Aorta (tissue), 5 donors: ENCODE measurements at regions of chr16 and their contacts with region 1.

Region 1: DNA sequence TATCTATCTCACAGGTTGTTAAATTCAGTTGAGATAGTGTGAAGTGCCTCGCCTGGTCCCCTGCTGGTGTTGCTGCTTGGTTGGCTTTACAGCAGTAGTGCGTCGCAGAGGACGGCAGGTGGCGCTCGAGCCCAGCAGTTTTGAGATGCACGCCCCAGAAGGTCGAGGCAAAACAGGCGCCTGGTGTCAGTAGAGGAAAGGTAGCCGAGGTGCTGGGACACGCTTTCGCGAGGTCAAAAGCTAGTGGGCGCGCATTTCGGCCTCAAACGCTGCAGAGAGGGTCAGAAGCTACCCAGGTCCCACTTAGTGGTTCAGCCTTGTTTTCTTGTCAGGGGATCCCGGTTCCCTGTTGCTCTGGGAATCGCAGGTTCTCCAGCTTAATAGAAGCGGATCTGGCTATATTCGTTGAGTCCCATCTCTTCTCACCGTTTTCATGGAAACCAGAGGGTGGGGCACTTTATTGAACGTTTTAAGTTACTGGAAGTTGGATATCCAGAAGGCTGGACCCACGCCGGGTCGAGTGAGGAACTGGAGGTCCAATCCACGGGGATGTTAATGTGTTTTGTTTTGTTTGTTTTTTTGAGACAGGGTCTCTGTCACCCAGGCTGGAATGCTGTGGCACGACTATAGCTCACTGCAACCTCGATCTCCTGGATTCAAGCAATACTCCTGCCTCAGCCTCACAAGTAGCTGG is 10.3 kb upstream of the ZFP90 start:
- DNase-seq: peak; percentile 89 to 95
- ATAC-seq: peak; percentile 94
- H3K4me3 ChIP-seq: no peak overlapping the region
- H3K27ac ChIP-seq: no peak overlapping the region
- H3K4me1 ChIP-seq: no peaks in the 10 kb centered on the region
- H3K27me3 ChIP-seq: no peaks in the 10 kb centered on the region

Region 2: DNA sequence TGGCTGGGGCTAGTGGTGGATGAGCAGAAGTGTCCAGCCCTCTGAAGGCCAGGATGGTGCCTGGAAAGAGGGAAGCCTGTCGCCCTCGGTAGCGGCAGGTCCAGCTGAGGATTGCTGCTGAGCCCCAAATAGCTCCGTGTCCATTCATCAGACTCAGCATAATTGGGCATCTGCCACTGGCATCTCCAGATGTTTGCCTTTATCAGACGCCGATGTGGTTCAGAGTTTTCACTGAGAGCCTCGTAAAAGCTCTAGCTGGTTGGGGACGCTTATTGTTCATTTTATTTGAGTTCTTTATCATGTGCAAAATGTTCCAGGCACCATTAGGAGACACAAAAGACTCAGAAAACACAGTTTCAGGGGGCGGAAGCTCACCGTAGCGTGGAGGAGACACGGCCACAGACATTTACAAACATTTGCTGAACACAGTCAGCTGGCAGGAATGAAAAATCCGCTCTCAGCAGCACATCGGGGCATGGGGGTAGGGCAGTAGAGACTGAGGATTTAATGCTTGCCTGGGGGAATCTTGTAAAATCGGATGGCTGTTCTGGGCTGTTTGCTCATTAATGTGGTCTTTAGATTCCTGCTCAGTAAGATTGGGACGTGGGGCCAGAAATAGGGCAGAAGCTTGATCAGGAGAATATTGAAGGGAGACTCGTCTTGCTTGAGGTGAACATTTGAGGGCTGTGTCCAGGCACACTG is 122.2 kb before region 1 on chr16:
- intact Hi-C with region 1: no loop called
- DNase-seq: peak in 1 of 2 donors; percentile 50
- ATAC-seq: no peak
- H3K4me3 ChIP-seq: no peak overlapping the region
- H3K27ac ChIP-seq: no peak overlapping the region
- H3K4me1 ChIP-seq: no peaks in the 10 kb centered on the region
- H3K27me3 ChIP-seq: no peaks in the 10 kb centered on the region

Region 3: GRCh38 chr16:68704232-68704867 is 175.5 kb after region 1 on chr16:
- intact Hi-C with region 1: no loop called
- DNase-seq: peak in 1 of 2 donors; percentile 63
- ATAC-seq: no peak
- H3K4me3 ChIP-seq: no peak overlapping the region
- H3K27ac ChIP-seq: no peak overlapping the region
- H3K4me1 ChIP-seq: no peaks in the 10 kb centered on the region
- H3K27me3 ChIP-seq: no peaks in the 10 kb centered on the region

Region 4: GRCh38 chr16:68800257-68800875 is 271.5 kb after region 1 on chr16:
- intact Hi-C with region 1: loop called in 1 of 2 experiments (anchors 5 kb)
- DNase-seq: no peak
- ATAC-seq: peak; percentile 50
- H3K4me3 ChIP-seq: no peak overlapping the region
- H3K27ac ChIP-seq: no peak overlapping the region
- H3K4me1 ChIP-seq: no peaks in the 10 kb centered on the region
- H3K27me3 ChIP-seq: no peaks in the 10 kb centered on the region

Region 5: DNA sequence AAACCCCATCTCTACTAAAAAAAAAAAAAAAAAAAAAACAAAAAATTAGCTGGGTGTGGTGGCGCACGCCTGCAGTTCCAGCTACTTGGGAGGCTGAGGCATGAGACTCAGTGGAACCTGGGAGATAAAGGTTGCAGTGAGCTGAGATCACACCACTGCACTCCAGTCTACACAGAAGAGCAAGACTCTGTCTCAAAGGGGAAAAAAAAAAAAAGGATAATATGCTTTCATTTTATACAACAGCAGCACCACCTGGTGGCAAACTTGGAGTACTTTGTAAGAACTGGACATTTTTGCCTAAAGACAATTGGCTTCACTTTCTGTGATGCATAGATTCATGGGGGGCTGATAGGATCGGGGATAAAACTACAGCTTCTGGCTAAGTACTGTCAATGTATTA is 595.1 kb after region 1 on chr16:
- intact Hi-C with region 1: loop called (anchors 5 kb)
- DNase-seq: peak in 1 of 2 donors; percentile 63
- ATAC-seq: no peak
- H3K4me3 ChIP-seq: no peak overlapping the region
- H3K27ac ChIP-seq: no peak overlapping the region
- H3K4me1 ChIP-seq: no peaks in the 10 kb centered on the region
- H3K27me3 ChIP-seq: no peaks in the 10 kb centered on the region

Region 6: GRCh38 chr16:70162041-70162451 is 1633.2 kb after region 1 on chr16:
- intact Hi-C with region 1: no loop called
- DNase-seq: peak; percentile 10 to 59
- ATAC-seq: no peak
- H3K4me3 ChIP-seq: no peak overlapping the region
- H3K27ac ChIP-seq: no peak overlapping the region
- H3K4me1 ChIP-seq: no peaks in the 10 kb centered on the region
- H3K27me3 ChIP-seq: no peaks in the 10 kb centered on the region